ENCODE measurements at regions of chr9 and their contacts with region 1.

Region 1: DNA sequence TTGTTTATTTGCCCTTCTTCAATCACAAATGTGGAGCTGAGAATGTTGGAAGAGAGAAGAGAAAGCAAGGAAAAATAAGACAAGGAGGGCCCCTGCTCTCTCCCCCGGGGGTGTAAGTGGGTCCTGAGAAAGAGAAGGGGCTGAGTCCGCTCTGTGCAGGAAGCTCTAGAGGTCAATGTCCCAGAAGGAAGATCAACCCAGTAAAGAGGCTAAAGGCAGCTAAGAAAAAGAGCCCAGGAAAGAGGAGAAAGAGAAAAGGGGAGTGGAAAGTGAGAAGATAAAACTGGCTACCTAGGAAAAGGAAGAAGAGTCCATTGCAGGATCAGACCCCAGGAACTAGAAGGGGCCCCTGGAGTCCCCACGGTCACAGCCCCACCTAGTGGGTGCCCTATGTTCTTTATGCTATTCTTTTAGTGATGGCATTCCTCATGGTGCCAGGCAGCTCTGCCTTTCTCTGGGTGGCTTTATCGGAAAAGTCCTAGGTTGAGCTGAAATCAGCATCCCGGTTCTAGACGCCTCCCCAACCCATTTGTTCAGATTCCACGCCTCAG is 583.4 kb downstream of the ACTL7B start:
- DNase-seq: peak; percentile 7
- H3K4me3 ChIP-seq: peak overlapping the region; percentile 49
- H3K27ac ChIP-seq: peak overlapping the region; percentile 35
- H3K27me3 ChIP-seq: no peaks in the 10 kb centered on the region
- CTCF ChIP-seq: peak; percentile 60

Region 2: DNA sequence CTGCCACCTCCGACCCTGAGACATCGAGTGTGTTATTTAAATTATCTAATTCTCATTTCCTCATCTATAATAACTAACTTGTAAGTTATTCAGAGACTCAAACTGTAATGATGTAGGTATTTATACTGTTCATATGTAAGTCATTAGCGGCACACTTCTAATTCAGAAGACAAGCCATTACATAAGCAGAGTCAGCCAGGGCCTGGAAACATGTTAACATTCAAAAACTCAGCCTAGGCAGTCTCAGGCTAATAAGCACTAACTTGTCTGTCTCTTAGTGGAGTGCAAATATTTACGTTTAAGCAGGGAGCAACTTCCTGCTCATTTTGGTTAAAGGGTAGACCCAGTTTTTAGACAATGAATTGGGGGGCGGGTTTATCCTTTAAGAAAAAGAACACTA is 15.0 kb before region 1 on chr9:
- CTCF ChIA-PET with region 1: no interaction called
- POLR2A ChIA-PET with region 1: no interaction called
- DNase-seq: no peak
- H3K4me3 ChIP-seq: no peak overlapping the region
- H3K27ac ChIP-seq: no peak overlapping the region
- H3K27me3 ChIP-seq: no peaks in the 10 kb centered on the region
- CTCF ChIP-seq: no peak

Region 3: DNA sequence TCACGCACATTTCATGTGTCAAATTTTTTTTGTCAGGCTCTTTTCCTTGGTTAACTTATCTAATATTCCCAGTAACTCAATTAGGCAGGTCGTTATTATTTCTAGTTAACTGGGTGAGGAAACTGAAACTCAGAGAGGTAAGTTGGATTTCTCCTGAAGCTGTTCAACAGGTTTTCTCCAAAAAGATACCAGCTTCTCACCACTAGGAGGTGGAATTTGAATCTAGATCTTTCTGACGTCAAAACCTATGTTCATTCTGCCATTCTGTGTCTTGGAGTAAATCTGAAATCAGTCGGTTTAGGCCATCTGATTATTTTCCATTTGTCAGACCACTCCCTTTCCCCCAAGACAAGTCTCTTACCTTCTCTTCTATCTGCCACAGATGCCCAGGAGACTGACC is 10.4 kb after region 1 on chr9:
- CTCF ChIA-PET with region 1: interaction called, 15 read pairs
- POLR2A ChIA-PET with region 1: no interaction called
- DNase-seq: no peak
- H3K4me3 ChIP-seq: no peak overlapping the region
- H3K27ac ChIP-seq: no peak overlapping the region
- H3K27me3 ChIP-seq: no peaks in the 10 kb centered on the region
- CTCF ChIP-seq: peak; percentile 34

Measured in AG04450 (cell line).